Activated B cell treated with CpG ODN at 0.5 μM for 24 hours (primary cell): ENCODE measurements at regions of chr16 and their contacts with region 1.

Region 1: DNA sequence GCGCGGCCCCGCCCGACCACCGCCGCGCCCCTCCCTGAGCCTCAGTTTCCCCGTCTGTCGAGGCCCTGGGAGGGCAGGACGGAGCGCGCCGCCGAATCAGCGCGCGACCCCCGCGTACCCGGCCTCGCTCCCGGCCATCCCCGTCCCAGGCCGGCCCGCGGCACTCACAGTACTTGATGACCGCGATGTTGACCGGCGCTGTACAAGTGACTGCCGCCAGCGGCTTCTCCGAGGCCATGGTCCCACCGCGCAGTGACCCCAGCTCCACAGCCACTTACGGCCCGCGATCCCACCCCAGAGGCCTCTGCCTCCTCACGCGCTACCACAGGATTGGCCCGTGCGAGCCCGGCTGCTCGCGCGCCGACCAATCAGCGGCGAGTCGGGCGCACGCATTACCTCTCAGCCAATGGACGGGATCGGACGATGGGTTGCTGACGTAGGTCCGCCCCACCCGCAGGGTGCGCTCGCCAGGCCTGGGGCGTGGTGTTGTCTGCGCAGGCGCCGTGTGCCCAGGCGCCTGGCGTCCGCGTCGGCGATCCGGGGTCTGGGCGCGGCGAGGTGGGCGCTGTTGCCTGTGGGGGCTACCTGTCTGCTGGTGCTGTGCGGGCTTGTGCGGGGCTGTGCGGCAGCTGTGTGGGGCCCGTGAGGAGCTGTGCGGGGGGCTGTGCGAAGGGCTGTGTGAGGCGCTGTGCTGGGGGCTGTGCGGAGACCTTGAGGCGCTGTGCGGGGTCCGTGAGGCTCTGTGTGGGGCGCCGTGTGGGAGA is at the start of gene MVD:
- DNase-seq: peak; percentile 89
- ATAC-seq: peak; percentile 94
- H3K4me3 Mint-ChIP-seq: peak within 1 kb of the TSS; percentile 94
- H3K27ac Mint-ChIP-seq: peak within 1 kb of the TSS; percentile 90
- H3K4me1 Mint-ChIP-seq: peaks cover 31% of the 10 kb centered on the region
- H3K27me3 Mint-ChIP-seq: no peaks in the 10 kb centered on the region
- CTCF ChIP-seq: no peak
- total RNA-seq, gene MVD: 115 and 140 TPM in 2 replicates

Region 2: DNA sequence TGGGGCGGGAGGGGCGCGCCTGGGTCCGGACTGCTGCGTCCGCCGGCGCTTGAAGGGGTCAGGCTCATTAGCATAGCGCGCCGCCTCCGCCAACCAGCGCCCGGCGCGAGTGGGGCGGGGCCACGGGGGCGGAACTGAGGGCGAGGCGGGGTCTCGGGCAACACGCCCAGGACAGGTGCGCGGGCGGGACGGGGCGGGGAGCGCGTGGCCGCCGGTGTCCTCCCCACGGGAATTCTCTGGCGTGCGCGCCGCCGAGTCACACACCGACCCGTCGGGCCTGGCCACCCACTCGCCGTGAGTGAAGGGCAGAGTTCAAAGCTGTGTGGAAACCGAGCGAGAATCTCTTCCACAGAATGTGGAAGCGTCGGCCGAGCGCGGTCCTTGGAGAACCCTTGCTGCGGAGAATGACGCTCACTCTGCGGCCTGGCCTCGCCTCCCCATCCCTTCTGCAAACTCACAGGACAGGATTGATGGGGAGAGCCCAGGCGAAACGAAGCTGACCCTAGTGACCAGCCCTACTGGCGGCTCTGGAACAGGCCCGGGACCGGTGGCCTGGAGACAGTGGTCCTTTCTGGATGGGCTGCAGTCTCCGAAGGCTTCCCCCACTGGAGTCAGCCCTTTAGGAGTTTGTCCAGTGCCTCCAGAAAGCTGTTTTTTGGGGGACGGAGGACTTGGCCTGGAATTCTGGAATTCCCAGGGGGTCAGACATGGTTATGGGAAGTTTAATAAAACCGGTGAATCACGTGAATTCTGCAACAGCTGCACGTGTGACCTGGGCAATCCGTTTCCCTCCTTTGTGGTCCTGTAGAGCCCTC is 23.6 kb after region 1 on chr16 and contains the start of gene SNAI3:
- CTCF ChIA-PET with region 1: interaction called, 5 read pairs
- POLR2A ChIA-PET with region 1: interaction called, 32 read pairs
- intact Hi-C with region 1: loop called (anchors 1 kb)
- DNase-seq: peak; percentile 94
- ATAC-seq: peak; percentile 74
- H3K4me3 Mint-ChIP-seq: peak within 1 kb of the TSS; percentile 83
- H3K27ac Mint-ChIP-seq: no peak within 1 kb of the TSS
- H3K4me1 Mint-ChIP-seq: peaks cover 46% of the 10 kb centered on the region
- H3K27me3 Mint-ChIP-seq: no peaks in the 10 kb centered on the region
- CTCF ChIP-seq: no peak
- total RNA-seq, gene SNAI3: 1.5 and 2.7 TPM in 2 replicates

Region 3: DNA sequence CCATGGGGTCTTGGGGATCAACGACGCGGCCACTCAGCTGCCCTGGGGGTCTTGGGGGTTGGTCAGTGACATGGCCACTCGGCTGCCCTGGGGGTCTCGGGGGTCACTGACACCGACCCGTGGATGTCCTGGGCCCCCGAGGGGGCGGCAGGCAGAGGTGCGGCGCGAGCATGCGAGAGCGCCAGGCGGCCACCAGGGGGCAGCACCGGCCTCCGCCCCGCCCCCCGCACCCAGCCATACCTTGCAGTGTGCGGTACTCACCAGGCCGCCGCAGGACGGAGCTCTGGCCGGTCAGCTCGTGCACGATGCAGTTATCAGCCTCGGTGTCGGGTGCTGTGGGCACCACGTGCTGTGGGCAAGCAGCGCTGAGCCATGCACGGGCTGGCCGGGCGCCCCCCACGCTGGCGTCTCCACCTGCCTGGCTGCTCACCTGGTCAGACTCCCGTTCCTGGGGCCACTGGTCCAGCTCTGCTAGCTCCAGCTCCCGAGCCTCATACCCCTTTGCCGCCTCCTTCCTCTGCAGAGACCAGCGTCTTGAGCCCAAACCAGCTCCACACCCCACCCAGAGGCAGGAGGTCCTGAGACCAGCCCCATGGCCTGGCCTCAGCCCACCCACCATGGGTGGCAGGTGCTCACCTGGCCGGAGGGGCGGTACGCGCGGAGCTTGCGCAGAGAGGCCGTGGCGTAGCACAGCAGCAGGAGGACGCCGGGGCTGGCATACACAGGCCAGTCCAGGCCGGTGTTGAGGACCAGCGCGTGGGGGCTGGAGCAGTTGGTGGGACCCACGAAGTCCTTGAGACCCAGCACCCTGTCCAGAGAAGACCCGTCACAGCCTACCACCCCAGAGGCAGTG is 74.5 kb after region 1 on chr16:
- CTCF ChIA-PET with region 1: no interaction called
- POLR2A ChIA-PET with region 1: no interaction called
- intact Hi-C with region 1: no loop called
- DNase-seq: peak; percentile 77
- ATAC-seq: peak; percentile 97
- H3K4me3 Mint-ChIP-seq: no peak overlapping the region
- H3K27ac Mint-ChIP-seq: no peak overlapping the region
- H3K4me1 Mint-ChIP-seq: peaks cover 6% of the 10 kb centered on the region
- H3K27me3 Mint-ChIP-seq: no peaks in the 10 kb centered on the region
- CTCF ChIP-seq: peak; percentile 95

Region 4: GRCh38 chr16:89052890-89053592 is 390.0 kb after region 1 on chr16:
- CTCF ChIA-PET with region 1: no interaction called
- POLR2A ChIA-PET with region 1: no interaction called
- intact Hi-C with region 1: no loop called
- DNase-seq: no peak
- ATAC-seq: peak; percentile 34
- H3K4me3 Mint-ChIP-seq: peak overlapping the region; percentile 85
- H3K27ac Mint-ChIP-seq: peak overlapping the region; percentile 65
- H3K4me1 Mint-ChIP-seq: peaks cover 9% of the 10 kb centered on the region
- H3K27me3 Mint-ChIP-seq: no peaks in the 10 kb centered on the region
- CTCF ChIP-seq: no peak